MCF 10A (cell line): ENCODE measurements at regions of chr20 and their contacts with region 1.

Region 1: DNA sequence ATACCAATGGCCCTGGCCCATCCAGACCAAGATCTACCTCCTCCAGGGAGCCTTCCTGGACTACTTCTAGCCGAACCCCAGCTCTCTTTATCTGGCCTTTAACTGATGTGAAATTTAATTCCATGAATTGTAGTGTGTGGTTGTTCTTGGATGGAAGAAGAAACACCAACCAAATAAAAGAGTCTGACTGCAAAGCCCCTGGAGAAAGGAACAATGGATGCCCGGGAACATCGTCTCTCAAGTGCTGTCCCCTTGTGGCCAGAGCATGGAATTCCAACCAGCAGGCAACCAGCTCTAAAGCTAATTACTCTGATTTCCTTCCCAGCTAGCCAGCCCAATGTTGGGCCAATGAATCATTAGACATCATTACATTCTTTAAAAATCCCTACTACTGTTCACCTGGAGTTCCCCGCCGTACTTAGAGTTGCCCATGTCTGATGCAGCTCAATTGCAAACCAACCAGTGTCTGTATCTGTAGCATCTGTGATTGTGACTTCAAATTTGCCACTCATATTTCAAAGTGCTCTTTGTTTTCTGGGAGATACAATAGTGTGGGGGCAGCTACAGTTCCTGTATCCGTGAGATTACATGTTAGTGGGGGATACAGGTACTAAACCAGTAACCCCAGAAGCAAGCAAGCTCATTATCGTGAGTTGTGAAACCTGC is 141.1 kb downstream of the ANKRD60 start:
- DNase-seq: peak; percentile 60
- H3K4me3 Mint-ChIP-seq: no peak overlapping the region
- H3K27ac Mint-ChIP-seq: no peak overlapping the region
- H3K4me1 Mint-ChIP-seq: no peaks in the 10 kb centered on the region
- H3K27me3 Mint-ChIP-seq: no peaks in the 10 kb centered on the region
- CTCF ChIP-seq: peak; percentile 77

Region 2: GRCh38 chr20:57622579-57623377 is 464.5 kb before region 1 on chr20:
- CTCF ChIA-PET with region 1: interaction called, 57 read pairs
- POLR2A ChIA-PET with region 1: no interaction called
- intact Hi-C with region 1: loop called (anchors 1 kb)
- DNase-seq: peak; percentile 75
- H3K4me3 Mint-ChIP-seq: no peak overlapping the region
- H3K27ac Mint-ChIP-seq: no peak overlapping the region
- H3K4me1 Mint-ChIP-seq: peaks cover 6% of the 10 kb centered on the region
- H3K27me3 Mint-ChIP-seq: no peaks in the 10 kb centered on the region
- CTCF ChIP-seq: peak; percentile 84

Region 3: GRCh38 chr20:57693002-57693640 is 394.2 kb before region 1 on chr20:
- CTCF ChIA-PET with region 1: interaction called, 23 read pairs
- POLR2A ChIA-PET with region 1: no interaction called
- intact Hi-C with region 1: loop called (anchors 1 kb)
- DNase-seq: peak; percentile 81
- H3K4me3 Mint-ChIP-seq: peak overlapping the region; percentile 11
- H3K27ac Mint-ChIP-seq: peak overlapping the region; percentile 7
- H3K4me1 Mint-ChIP-seq: peaks cover 46% of the 10 kb centered on the region
- H3K27me3 Mint-ChIP-seq: no peaks in the 10 kb centered on the region
- CTCF ChIP-seq: peak; percentile 39

Region 4: DNA sequence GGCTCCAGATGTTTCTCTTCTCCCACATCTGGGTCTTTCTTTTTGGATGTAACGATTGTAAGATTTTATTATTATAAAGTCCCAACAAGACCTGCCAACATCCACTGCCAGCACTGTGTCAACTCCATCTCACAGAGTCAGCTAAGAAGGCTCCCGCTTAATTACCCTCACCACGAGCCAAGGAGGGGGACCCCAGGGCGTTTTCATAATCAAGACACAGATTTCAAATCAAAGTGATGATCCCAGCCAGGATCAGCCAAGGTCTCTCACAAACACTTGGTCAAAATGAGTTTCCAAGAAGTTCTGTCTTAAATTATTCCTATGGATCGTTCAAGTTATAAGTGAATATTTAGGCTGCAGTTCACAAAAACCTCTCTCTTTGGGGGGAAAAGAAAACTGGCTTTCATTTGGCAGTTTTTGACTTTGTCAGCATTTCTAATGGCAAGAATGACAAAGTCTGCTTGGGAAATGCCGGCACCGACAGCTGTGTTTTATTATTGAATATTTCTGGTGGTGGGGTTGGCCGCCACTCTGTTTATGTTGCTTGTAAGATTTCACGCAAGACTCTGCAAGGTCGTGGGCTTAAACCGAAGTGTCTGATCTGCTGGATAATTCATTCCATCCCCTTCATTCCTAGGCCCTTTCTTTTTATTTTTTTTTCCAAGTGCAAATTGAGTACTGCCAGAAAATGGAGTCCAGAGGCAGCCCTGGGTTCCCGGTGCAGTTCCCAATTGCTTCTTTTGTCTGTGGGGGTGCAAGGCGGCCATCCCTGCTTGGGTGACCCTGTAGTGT is 207.4 kb before region 1 on chr20:
- CTCF ChIA-PET with region 1: no interaction called
- POLR2A ChIA-PET with region 1: no interaction called
- intact Hi-C with region 1: loop called (anchors 10 kb)
- DNase-seq: no peak
- H3K4me3 Mint-ChIP-seq: no peak overlapping the region
- H3K27ac Mint-ChIP-seq: no peak overlapping the region
- H3K4me1 Mint-ChIP-seq: peaks cover 8% of the 10 kb centered on the region
- H3K27me3 Mint-ChIP-seq: peaks cover 76% of the 10 kb centered on the region
- CTCF ChIP-seq: no peak

Region 5: DNA sequence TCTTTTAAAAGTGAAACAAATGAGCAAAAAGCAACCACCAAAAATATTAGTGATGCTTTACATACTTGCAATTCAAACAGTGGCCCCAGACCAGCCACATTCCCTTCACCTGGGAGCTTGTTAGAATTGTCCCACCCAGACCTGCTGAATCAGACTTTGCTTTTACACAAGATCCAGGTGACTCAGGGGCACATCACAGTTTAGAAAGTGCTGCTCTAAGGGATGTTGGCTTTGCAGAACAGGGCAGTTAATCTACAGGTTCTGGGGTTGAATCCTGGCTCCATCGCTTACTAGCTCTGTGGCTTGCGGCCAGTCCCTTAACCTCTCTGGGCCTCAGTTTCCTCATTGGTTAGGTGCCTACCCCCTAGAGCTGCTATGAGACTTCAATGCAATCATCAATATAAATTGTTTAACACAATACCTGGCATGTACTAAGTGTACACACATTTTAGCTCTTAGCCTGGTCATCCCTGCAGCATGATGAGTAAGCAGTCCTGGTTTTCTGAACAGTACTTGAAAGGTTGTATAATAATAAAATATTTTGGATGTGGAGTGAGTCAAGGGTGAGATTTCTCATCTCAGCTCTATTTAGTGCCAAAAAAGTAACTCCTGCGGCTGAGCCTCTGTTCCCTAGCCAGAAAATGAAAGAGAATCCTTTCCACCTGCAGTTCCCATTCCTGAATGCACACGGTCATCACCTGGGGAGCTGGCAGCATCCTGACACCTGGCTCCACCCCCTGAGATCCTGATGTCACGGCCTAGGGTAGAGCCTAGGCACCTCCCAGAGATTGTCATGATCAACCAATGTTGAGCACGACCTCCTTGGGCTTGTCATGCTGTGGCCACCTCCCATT is 21.6 kb before region 1 on chr20:
- CTCF ChIA-PET with region 1: interaction called, 21 read pairs
- POLR2A ChIA-PET with region 1: no interaction called
- intact Hi-C with region 1: no loop called
- DNase-seq: peak; percentile 44
- H3K4me3 Mint-ChIP-seq: no peak overlapping the region
- H3K27ac Mint-ChIP-seq: no peak overlapping the region
- H3K4me1 Mint-ChIP-seq: no peaks in the 10 kb centered on the region
- H3K27me3 Mint-ChIP-seq: peaks cover 55% of the 10 kb centered on the region
- CTCF ChIP-seq: no peak

Region 6: GRCh38 chr20:58112017-58112781 is 24.9 kb after region 1 on chr20:
- CTCF ChIA-PET with region 1: interaction called, 11 read pairs
- POLR2A ChIA-PET with region 1: interaction called, 9 read pairs
- intact Hi-C with region 1: no loop called
- DNase-seq: peak; percentile 92
- H3K4me3 Mint-ChIP-seq: peak overlapping the region; percentile 15
- H3K27ac Mint-ChIP-seq: peak overlapping the region; percentile 87
- H3K4me1 Mint-ChIP-seq: peaks cover 36% of the 10 kb centered on the region
- H3K27me3 Mint-ChIP-seq: no peaks in the 10 kb centered on the region
- CTCF ChIP-seq: no peak